ENCODE measurements at regions of chr2 and their contacts with region 1.

Region 1: DNA sequence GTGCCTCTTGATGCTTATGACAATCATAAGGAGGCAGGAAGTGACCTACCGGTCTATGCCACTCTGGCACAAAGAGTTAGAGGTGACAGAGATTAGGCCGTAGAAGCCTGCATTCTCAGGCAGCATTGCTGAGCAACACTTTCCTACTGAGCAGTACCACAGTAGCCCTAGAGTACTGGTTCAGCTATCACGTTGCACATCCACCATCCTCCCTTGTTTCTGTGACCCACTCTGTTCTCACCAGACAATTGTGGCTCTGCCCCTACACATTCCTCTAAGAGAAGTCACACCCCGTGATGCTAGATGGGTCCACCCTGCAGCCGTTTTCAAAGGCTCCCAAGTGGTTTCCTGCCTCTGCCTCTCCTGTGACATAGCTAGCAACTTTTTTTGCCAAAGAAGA is 22.6 kb upstream of the SUCLG1 start:
- DNase-seq: peak in 8 of 14 experiments; percentile 8 to 49 (median 23)
- ATAC-seq: peak; percentile 72
- H3K4me3 ChIP-seq: no peak overlapping the region
- H3K4me3 Mint-ChIP-seq: peak overlapping the region; percentile 3
- H3K27ac ChIP-seq: peak overlapping the region in 1 of 2 donors; percentile 28
- H3K27ac Mint-ChIP-seq: peak overlapping the region; percentile 84
- H3K4me1 ChIP-seq: peaks cover 15% of the 10 kb centered on the region
- H3K4me1 Mint-ChIP-seq: peaks cover 19% of the 10 kb centered on the region
- H3K27me3 ChIP-seq: no peaks in the 10 kb centered on the region
- H3K27me3 Mint-ChIP-seq: no peaks in the 10 kb centered on the region
- CTCF ChIP-seq: no peak

Region 2: DNA sequence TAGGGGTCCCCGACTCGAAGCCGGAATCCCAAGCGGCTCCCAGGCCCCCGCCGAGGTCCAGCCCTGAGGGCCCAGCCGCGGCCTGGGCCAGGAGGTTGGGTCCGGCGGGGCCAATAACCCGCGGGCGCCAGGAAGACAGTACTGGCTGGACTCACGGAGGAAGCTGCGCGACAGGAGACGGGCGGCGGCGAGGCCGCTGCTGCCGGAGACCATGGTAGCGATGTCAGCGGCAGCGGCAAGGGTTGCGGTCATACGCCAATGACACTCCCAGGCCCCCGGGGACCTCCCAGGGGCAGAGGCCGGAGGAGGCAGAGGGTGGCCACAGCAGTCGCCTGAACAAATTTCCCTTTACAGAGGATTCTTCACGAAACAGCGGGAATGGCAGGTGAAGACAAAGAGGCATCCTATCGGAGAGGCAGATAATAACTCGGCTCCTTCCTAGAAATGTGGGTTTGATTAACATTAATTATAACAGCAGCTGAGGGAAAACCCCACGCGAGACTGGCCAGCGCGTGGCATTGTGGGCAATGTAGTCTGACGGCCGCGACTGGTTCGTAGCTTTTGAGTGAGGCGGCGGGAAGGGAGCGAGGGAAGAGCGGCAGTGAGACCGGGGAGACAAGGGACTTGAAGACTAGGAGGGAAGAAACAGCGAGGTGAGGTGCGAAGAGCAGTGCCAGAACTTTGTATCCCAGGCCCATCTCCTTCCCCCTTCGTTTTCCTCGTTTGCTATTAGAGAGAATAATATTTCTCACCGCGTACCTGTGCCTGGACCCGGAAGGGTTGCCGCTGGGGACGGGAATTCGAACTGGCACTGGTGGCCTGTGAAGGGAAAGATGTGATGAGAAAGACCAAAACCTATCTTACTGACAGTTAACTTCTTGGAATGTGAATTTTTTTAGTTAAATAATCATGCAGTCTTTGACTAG is 22.4 kb before region 1 on chr2 and contains the start of gene SUCLG1:
- CTCF ChIA-PET with region 1: no interaction called
- POLR2A ChIA-PET with region 1: interaction called, 11 read pairs
- intact Hi-C with region 1: no loop called
- DNase-seq: peak; percentile 73 to 94 (median 80)
- ATAC-seq: peak; percentile 94
- H3K4me3 ChIP-seq: peak within 1 kb of the TSS; percentile 93
- H3K4me3 Mint-ChIP-seq: peak within 1 kb of the TSS; percentile 95
- H3K27ac ChIP-seq: peak within 1 kb of the TSS; percentile 87 to 94
- H3K27ac Mint-ChIP-seq: peak within 1 kb of the TSS; percentile 92
- H3K4me1 ChIP-seq: peaks cover 19% of the 10 kb centered on the region
- H3K4me1 Mint-ChIP-seq: peaks cover 49% of the 10 kb centered on the region
- H3K27me3 ChIP-seq: no peaks in the 10 kb centered on the region
- H3K27me3 Mint-ChIP-seq: no peaks in the 10 kb centered on the region
- CTCF ChIP-seq: no peak
- total RNA-seq, gene SUCLG1: 34.2 to 37.1 TPM

Region 3: DNA sequence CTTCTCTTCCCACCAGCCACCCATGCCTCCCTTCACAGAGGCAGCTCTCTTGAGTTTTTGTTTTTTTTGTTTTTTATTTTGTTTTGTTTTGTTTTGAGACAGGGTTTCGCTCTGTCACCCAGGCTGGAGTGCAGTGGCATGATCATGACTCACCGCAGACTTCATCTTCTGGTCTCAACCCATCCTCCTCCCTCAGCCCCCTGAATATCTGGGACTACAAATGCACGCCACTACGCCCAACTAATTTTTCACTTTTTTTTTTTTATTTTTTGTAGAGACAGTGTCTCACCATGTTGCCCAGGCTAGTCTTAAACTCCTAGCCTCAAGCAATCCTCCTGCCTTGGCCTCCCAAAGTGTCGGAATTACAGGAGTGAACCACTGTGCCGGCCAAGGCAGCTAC is 237.7 kb after region 1 on chr2:
- CTCF ChIA-PET with region 1: no interaction called
- POLR2A ChIA-PET with region 1: no interaction called
- intact Hi-C with region 1: no loop called
- DNase-seq: peak in 5 of 14 experiments; percentile 6 to 23 (median 13)
- ATAC-seq: no peak
- H3K4me3 ChIP-seq: peak overlapping the region; percentile 2
- H3K4me3 Mint-ChIP-seq: peak overlapping the region; percentile 63
- H3K27ac ChIP-seq: no peak overlapping the region
- H3K27ac Mint-ChIP-seq: peak overlapping the region; percentile 68
- H3K4me1 ChIP-seq: peaks cover 15% of the 10 kb centered on the region
- H3K4me1 Mint-ChIP-seq: peaks cover 60% of the 10 kb centered on the region
- H3K27me3 ChIP-seq: no peaks in the 10 kb centered on the region
- H3K27me3 Mint-ChIP-seq: no peaks in the 10 kb centered on the region
- CTCF ChIP-seq: no peak